RWPE1 (cell line): ENCODE measurements at regions of chr5 and their contacts with region 1.

Region 1: DNA sequence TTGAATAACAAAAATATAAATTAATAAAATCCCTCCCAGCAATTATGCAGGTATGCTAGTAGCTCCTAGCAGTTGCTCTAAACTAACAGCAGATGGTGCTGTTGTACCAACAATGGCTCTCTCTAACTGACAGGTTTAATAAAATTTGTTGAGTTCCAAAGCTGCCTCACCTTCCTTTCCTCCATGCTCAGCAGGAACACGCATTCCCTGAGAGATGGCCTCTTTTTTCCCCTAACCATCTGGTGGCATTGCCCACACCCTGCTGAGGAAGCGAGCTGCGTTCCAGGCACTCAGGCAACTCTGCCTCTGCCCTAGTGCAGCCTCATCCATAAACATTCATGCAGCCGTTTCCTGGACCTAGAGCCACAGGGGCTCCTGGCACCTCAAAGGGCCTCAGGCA is 106.2 kb downstream of the KLHL3 start:
- DNase-seq: peak; percentile 83
- H3K27ac ChIP-seq: no peak overlapping the region
- CTCF ChIP-seq: peak; percentile 90

Region 2: DNA sequence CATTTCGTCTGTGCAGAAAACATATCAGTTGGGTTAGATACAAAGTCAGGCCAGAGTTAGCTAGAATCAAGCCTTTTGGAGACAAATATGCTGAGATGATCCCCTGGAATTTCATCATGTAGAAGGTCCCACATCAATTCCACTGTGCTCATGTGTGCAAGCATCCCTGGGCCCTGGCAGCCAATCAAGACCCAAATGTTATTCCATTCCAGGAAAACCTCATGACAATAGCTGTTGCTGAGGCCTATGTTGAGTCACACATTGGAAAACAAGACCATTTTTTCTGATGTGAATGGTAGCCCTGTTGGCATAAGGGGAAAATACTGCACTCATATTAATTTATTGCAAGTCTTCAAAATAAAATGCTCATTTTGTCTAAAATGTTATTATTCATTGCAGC is 142.0 kb before region 1 on chr5:
- CTCF ChIA-PET with region 1: no interaction called
- POLR2A ChIA-PET with region 1: no interaction called
- DNase-seq: no peak
- H3K27ac ChIP-seq: no peak overlapping the region
- CTCF ChIP-seq: no peak

Region 3: DNA sequence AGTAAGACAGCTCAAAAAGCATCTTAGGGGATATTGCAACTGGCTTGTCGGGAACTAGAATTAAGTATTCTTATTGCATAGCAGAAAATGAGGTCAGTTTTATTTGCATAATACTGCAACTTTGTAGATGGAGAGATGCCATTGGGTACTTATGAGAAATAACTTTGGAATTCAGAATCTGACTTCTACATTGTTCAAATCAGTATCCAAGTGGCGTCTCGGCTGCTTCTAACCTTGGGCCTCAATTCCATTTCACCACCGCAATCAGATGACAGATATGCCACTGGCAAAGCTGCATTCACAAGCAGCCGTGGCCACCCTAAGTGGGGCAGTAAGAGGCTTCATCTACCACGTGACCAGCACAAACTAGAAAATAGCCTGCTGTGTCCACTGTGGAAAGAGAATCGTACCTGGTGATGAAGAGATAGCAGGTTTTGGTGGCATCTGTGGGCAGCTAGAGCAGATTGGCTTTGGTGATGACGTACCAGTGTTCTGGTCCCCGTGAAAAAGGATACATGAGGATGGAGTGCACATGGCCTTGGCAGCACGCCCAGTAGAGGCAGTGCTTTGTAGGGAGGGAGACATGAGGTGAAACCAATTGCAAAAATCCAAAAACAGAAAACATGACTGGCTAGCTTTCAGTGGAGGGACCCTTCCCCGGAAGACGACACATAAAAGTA is 10.3 kb before region 1 on chr5:
- CTCF ChIA-PET with region 1: interaction called, 17 read pairs
- POLR2A ChIA-PET with region 1: no interaction called
- DNase-seq: peak; percentile 60
- H3K27ac ChIP-seq: no peak overlapping the region
- CTCF ChIP-seq: no peak

Region 4: DNA sequence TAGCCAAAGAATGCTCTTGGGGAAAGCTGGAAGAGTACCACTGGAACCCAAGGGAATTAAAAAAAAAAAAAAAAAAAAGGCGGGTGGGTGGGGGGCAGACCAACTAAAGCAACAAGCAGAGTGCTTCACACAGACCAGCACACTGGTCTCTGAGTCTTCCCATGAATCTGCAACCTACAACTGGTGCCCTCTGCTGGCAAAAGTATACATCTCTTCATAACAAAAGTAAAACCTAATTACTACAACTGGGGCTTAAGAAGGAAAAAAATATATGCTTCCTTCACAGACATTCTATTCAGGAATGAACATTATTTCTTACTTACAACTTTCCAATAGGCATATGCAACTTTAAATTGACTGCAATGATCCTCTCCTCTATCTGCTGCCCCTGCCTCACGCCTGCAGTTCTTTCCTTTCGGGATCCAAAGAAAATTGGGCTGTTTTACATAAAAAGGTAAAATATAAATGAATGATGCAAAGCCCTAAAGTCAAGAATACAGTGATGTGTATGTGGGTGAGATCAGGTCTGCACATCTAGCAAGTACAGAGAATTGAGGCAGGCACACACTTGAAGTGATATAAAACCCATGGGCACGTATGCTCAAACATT is 113.5 kb after region 1 on chr5:
- CTCF ChIA-PET with region 1: interaction called, 93 read pairs
- POLR2A ChIA-PET with region 1: no interaction called
- DNase-seq: peak; percentile 62
- H3K27ac ChIP-seq: no peak overlapping the region
- CTCF ChIP-seq: peak; percentile 84